GM12878 (cell line): ENCODE measurements at regions of chr15 and their contacts with region 1.

Region 1: DNA sequence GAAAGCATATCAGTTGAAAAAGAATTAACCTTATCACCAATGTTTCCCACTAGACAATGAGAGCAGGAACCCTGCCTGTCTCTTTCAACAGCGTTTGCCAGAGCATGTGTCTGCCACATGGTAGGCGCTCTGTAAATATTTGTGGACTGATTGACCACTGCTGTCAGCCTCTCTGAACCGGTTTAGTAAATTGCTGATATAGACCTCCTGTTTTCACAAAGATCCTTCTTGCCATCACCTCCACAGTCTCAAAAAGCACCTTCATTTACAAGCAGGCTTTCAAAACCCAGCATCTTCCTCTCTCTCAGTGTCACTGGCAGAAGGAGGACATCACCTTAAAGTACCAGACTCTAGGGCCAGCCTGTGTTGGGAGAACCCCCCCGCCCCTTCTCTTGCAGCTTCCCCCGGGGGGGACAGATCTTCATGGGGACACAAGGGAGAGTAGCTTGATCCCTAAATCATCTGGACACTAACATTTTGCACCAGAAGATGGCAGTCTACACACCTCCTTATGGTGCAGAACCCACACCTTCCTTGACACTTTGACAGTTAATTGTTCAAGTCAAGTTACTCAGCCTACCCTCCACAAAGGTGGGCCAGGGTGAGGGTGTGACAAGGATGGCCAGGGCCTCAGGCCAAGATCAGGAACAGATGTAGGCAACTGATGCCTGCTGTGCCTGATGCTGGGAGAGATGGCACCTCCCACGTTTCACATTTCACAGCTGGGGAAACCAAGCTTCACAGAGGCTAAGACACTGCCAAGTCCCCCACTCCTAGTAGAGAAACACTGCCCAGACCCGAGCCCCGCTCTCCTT is 37.8 kb upstream of the USP3 start:
- DNase-seq: no peak
- ATAC-seq: peak; percentile 96
- H3K4me3 ChIP-seq: no peak overlapping the region
- H3K27ac ChIP-seq: no peak overlapping the region
- H3K4me1 ChIP-seq: peaks cover 16% of the 10 kb centered on the region
- H3K27me3 ChIP-seq: no peaks in the 10 kb centered on the region
- CTCF ChIP-seq: peak; percentile 65 to 79 (median 70)
- EP300 ChIP-seq: no peak
- POLR2A ChIP-seq: no peak
- RAD21 ChIP-seq: peak; percentile 89

Region 2: GRCh38 chr15:63093486-63094205 is 372.9 kb before region 1 on chr15:
- CTCF ChIA-PET with region 1: no interaction called
- POLR2A ChIA-PET with region 1: no interaction called
- RAD21 ChIA-PET with region 1: no interaction called
- SMC1A ChIA-PET with region 1: no interaction called
- in situ Hi-C with region 1: no loop called
- intact Hi-C with region 1: no loop called
- DNase-seq: peak; percentile 35
- ATAC-seq: peak; percentile 99
- H3K4me3 ChIP-seq: no peak overlapping the region
- H3K27ac ChIP-seq: no peak overlapping the region
- H3K4me1 ChIP-seq: no peaks in the 10 kb centered on the region
- H3K27me3 ChIP-seq: no peaks in the 10 kb centered on the region; a peak in 2 of 4 replicates
- CTCF ChIP-seq: peak; percentile 83 to 89 (median 84)
- EP300 ChIP-seq: no peak
- POLR2A ChIP-seq: no peak
- RAD21 ChIP-seq: peak; percentile 91

Region 3: DNA sequence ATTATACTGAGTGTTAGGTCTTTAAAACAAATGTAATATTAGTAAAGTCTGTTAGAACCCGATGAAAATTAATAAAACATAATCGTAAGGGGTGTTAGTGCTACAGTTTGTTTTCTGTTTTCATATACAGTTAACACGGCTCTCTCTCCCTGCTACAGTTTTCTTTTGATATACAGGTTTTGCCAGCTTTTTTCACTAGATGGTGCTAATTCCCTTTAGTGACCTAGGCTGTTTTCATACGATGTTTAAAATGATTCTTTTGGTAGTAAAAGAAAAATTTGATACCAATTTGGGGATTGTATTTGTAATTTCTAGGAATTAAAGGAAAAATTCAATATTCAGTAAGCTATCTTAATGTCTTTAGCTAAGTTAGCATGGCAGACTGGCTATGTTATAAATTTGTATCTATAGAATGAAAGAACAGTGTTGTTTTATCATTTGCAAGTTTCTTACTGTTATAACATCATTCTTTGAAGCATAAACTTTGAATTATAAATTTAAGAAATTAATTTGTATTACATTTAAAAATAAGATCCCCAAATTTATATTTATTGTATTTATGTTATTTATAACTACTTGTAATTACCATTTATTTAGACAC is 177.7 kb before region 1 on chr15:
- CTCF ChIA-PET with region 1: interaction called, 8 read pairs
- POLR2A ChIA-PET with region 1: no interaction called
- RAD21 ChIA-PET with region 1: interaction called, 6 read pairs
- SMC1A ChIA-PET with region 1: interaction called, 19 read pairs
- in situ Hi-C with region 1: no loop called
- intact Hi-C with region 1: no loop called
- DNase-seq: no peak
- ATAC-seq: peak; percentile 82
- H3K4me3 ChIP-seq: no peak overlapping the region
- H3K27ac ChIP-seq: no peak overlapping the region
- H3K4me1 ChIP-seq: no peaks in the 10 kb centered on the region
- H3K27me3 ChIP-seq: no peaks in the 10 kb centered on the region
- CTCF ChIP-seq: peak; percentile 54 to 71 (median 60)
- EP300 ChIP-seq: no peak
- POLR2A ChIP-seq: no peak
- RAD21 ChIP-seq: peak; percentile 87

Region 4: GRCh38 chr15:63497642-63498467 is 31.3 kb after region 1 on chr15:
- CTCF ChIA-PET with region 1: interaction called, 34 read pairs
- POLR2A ChIA-PET with region 1: interaction called, 40 read pairs
- RAD21 ChIA-PET with region 1: interaction called, 197 read pairs
- SMC1A ChIA-PET with region 1: interaction called, 12 read pairs
- in situ Hi-C with region 1: no loop called
- intact Hi-C with region 1: no loop called
- DNase-seq: no peak
- ATAC-seq: peak; percentile 73
- H3K4me3 ChIP-seq: peak overlapping the region; percentile 4; the same call in 1 of the 2 replicates
- H3K27ac ChIP-seq: peak overlapping the region; percentile 80
- H3K4me1 ChIP-seq: peaks cover 69% of the 10 kb centered on the region
- H3K27me3 ChIP-seq: no peaks in the 10 kb centered on the region
- CTCF ChIP-seq: no peak
- EP300 ChIP-seq: no peak
- POLR2A ChIP-seq: no peak
- RAD21 ChIP-seq: no peak

Region 5: GRCh38 chr15:63539521-63539920 is 72.9 kb after region 1 on chr15:
- CTCF ChIA-PET with region 1: interaction called, 17 read pairs
- POLR2A ChIA-PET with region 1: interaction called, 3 read pairs
- RAD21 ChIA-PET with region 1: interaction called, 6 read pairs
- SMC1A ChIA-PET with region 1: interaction called, 26 read pairs
- in situ Hi-C with region 1: no loop called
- intact Hi-C with region 1: no loop called
- DNase-seq: no peak
- ATAC-seq: no peak
- H3K4me3 ChIP-seq: no peak overlapping the region
- H3K27ac ChIP-seq: no peak overlapping the region
- H3K4me1 ChIP-seq: peaks cover 35% of the 10 kb centered on the region
- H3K27me3 ChIP-seq: no peaks in the 10 kb centered on the region
- CTCF ChIP-seq: no peak
- EP300 ChIP-seq: no peak
- POLR2A ChIP-seq: no peak
- RAD21 ChIP-seq: no peak

Region 6: GRCh38 chr15:63593705-63594671 is 127.4 kb after region 1 on chr15:
- CTCF ChIA-PET with region 1: interaction called, 272 read pairs
- POLR2A ChIA-PET with region 1: interaction called, 12 read pairs
- RAD21 ChIA-PET with region 1: interaction called, 106 read pairs
- SMC1A ChIA-PET with region 1: interaction called, 150 read pairs
- in situ Hi-C with region 1: loop called (anchors 5 kb)
- intact Hi-C with region 1: loop called (anchors 2 kb)
- DNase-seq: no peak
- ATAC-seq: peak; percentile 15
- H3K4me3 ChIP-seq: no peak overlapping the region
- H3K27ac ChIP-seq: 0 out of 2 replicates have a peak overlapping the region, but pooled peaks have one; percentile 6
- H3K4me1 ChIP-seq: peaks cover 53% of the 10 kb centered on the region
- H3K27me3 ChIP-seq: no peaks in the 10 kb centered on the region
- CTCF ChIP-seq: no peak
- EP300 ChIP-seq: no peak
- POLR2A ChIP-seq: peak; percentile 9; the same call in 1 of the 2 replicates
- RAD21 ChIP-seq: no peak

Region 7: GRCh38 chr15:63626955-63627354 is 160.4 kb after region 1 on chr15:
- CTCF ChIA-PET with region 1: interaction called, 14 read pairs
- POLR2A ChIA-PET with region 1: no interaction called
- RAD21 ChIA-PET with region 1: interaction called, 6 read pairs
- SMC1A ChIA-PET with region 1: no interaction called
- in situ Hi-C with region 1: no loop called
- intact Hi-C with region 1: no loop called
- DNase-seq: peak; percentile 56
- ATAC-seq: peak; percentile 93
- H3K4me3 ChIP-seq: no peak overlapping the region
- H3K27ac ChIP-seq: peak overlapping the region; percentile 80
- H3K4me1 ChIP-seq: peaks cover 18% of the 10 kb centered on the region
- H3K27me3 ChIP-seq: no peaks in the 10 kb centered on the region
- CTCF ChIP-seq: no peak
- EP300 ChIP-seq: no peak
- POLR2A ChIP-seq: no peak
- RAD21 ChIP-seq: no peak